PC-3 (cell line): ENCODE measurements at regions of chr1 and their contacts with region 1.

Region 1: DNA sequence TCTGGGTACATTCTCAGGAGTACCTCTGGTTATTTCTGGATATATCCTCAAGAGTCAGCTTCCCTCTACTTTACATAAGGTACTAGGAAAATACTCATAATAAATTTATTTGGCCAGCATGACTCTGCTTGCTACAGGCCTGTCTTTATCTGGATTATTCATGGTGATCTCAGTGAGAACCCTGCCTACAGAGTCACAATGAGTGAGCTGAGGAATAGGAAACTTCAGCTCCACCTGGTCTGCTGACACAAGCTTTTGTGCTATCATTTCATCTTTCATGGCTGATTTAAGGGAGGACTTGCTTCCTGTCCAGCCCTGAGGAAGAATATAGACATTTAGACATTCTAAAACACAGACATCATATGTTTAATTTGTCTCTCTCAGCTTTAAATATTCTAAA is 19.5 kb upstream of the SUCO start:
- DNase-seq: peak; percentile 89
- ATAC-seq: peak; percentile 98
- H3K4me3 ChIP-seq: no peak overlapping the region
- H3K27ac ChIP-seq: peak overlapping the region; percentile 33
- H3K4me1 ChIP-seq: peaks cover 25% of the 10 kb centered on the region
- H3K27me3 ChIP-seq: no peaks in the 10 kb centered on the region
- CTCF ChIP-seq: no peak

Region 2: GRCh38 chr1:172482044-172482443 is 31.4 kb before region 1 on chr1:
- CTCF ChIA-PET with region 1: no interaction called
- POLR2A ChIA-PET with region 1: no interaction called
- intact Hi-C with region 1: loop called (anchors 2 kb)
- DNase-seq: peak; percentile 50
- ATAC-seq: no peak
- H3K4me3 ChIP-seq: no peak overlapping the region
- H3K27ac ChIP-seq: no peak overlapping the region
- H3K4me1 ChIP-seq: peaks cover 46% of the 10 kb centered on the region
- H3K27me3 ChIP-seq: no peaks in the 10 kb centered on the region
- CTCF ChIP-seq: no peak

Region 3: DNA sequence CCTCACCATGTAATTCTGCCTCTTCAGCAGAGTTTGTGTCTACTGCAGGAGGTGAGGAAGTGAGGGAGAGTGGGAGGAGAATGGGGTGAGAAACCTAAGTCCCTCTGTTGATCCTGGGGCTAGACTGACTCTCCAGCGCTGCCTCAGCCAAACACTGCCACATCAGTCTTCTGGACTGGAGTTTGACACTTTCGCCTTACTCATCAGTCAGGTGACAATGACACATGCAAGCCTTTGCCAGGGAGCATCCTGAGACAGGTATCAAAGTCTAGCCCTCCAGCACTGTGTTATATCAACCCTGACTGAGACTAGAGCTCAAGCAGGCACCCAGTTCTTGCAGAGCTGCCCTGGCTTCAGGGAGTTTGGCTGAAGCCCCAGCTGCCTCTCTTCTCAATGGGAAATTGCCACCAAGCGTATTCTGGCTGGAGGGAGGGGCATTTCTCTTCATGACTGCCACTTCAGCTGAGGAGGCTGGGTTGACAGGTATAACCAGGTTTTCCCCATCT is 13.8 kb before region 1 on chr1:
- CTCF ChIA-PET with region 1: no interaction called
- POLR2A ChIA-PET with region 1: interaction called, 4 read pairs
- intact Hi-C with region 1: loop called (anchors 1 kb)
- DNase-seq: peak; percentile 100
- ATAC-seq: peak; percentile 92
- H3K4me3 ChIP-seq: no peak overlapping the region
- H3K27ac ChIP-seq: peak overlapping the region; percentile 44
- H3K4me1 ChIP-seq: peaks cover 38% of the 10 kb centered on the region
- H3K27me3 ChIP-seq: no peaks in the 10 kb centered on the region
- CTCF ChIP-seq: peak; percentile 14; the same call in 1 of the 2 replicates